ENCODE measurements at regions of chr10 and their contacts with region 1.

Region 1: DNA sequence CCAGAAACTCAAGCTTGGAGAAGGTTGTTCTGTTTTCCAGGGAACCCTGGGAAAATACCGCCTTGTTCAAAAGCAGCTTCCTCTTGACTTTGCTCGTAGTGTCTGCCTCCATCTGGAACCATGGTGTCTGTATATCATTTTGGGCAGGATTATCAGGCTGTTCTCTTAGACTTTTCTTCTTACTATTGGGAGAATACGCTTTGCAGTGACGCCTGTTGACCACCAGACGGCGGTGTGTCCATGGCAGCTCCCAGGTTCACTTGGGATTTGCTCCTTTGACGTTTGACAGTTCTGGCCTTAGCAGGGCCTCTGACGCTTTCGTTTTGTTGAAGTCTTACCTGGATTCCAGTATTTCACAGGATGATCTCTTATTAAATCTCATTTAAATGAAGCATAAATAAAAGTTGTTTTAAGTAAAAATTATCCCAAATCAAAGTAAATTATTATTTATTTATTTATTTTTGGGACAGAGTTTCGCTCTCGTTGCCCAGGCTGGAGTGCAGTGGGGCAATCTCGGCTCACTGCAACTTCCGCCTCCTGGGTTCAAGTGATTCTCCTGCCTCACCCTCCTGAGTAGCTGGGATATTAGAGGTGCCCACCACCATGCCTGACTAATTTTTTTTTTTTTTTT is 41.8 kb upstream of the GJD4 start:
- DNase-seq: peak; percentile 69
- CTCF ChIP-seq: peak; percentile 98

Region 2: DNA sequence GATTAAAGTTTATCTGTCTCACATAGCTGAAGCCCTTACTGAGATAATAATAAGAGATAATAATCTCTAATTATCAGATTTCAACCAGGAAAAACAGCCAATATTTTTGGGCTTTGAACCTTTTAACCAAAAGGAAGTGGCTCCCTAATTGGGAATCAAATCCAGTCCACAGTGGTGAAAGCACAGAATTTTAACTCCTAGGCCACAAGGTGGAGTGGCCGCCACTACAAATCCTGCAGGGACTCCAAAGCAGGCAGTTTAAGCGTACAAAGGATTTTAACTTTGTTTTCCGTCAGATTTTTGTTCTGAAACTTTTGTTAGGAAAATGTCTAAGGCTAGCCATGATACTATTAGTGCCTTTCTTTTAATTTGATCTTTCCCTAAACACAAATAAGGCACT is 326.6 kb before region 1 on chr10:
- in situ Hi-C with region 1: loop called (anchors 25 kb)
- DNase-seq: no peak
- CTCF ChIP-seq: peak; percentile 3

Region 3: GRCh38 chr10:35770817-35771355 is 207.5 kb after region 1 on chr10:
- in situ Hi-C with region 1: no loop called
- DNase-seq: no peak
- CTCF ChIP-seq: no peak